ENCODE measurements at regions of chr16 and their contacts with region 1.

Region 1: GRCh38 chr16:31458844-31459721 is at the start of gene ARMC5:
- DNase-seq: peak; percentile 97
- H3K4me3 ChIP-seq: peak within 1 kb of the TSS; percentile 79 to 93 (median 88)
- H3K27ac ChIP-seq: peak within 1 kb of the TSS; percentile 91
- H3K4me1 ChIP-seq: peaks cover 41% of the 10 kb centered on the region
- H3K27me3 ChIP-seq: no peaks in the 10 kb centered on the region
- CTCF ChIP-seq: peak; percentile 25 to 68
- total RNA-seq, gene ARMC5: 8.7 to 10.7 TPM

Region 2: DNA sequence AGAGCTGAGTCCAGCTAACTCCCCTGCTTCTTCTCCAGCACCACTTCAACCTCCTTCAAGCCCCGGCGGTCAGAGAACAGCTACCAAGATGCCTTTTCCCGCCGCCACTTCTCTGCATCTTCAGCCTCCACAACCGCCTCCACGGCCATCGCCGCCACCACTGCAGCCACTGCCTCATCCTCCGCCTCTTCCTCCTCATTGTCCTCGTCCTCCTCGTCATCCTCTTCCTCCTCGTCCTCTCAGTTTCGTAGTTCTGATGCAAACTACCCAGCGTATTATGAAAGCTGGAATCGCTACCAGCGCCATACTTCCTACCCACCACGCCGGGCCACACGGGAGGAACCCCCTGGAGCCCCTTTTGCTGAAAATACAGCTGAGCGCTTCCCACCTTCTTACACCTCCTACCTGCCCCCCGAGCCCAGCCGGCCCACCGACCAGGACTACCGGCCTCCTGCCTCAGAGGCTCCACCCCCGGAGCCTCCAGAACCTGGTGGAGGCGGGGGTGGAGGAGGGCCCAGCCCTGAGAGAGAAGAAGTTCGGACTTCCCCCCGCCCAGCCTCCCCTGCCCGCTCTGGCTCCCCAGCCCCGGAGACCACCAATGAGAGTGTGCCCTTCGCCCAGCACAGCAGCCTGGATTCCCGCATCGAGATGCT is 494.4 kb before region 1 on chr16:
- CTCF ChIA-PET with region 1: no interaction called
- dilution Hi-C with region 1: loop called (anchors 10 kb)
- in situ Hi-C with region 1: no loop called
- intact Hi-C with region 1: no loop called
- DNase-seq: no peak
- H3K4me3 ChIP-seq: no peak overlapping the region
- H3K27ac ChIP-seq: no peak overlapping the region
- H3K4me1 ChIP-seq: no peaks in the 10 kb centered on the region
- H3K27me3 ChIP-seq: no peaks in the 10 kb centered on the region
- CTCF ChIP-seq: no peak

Region 3: DNA sequence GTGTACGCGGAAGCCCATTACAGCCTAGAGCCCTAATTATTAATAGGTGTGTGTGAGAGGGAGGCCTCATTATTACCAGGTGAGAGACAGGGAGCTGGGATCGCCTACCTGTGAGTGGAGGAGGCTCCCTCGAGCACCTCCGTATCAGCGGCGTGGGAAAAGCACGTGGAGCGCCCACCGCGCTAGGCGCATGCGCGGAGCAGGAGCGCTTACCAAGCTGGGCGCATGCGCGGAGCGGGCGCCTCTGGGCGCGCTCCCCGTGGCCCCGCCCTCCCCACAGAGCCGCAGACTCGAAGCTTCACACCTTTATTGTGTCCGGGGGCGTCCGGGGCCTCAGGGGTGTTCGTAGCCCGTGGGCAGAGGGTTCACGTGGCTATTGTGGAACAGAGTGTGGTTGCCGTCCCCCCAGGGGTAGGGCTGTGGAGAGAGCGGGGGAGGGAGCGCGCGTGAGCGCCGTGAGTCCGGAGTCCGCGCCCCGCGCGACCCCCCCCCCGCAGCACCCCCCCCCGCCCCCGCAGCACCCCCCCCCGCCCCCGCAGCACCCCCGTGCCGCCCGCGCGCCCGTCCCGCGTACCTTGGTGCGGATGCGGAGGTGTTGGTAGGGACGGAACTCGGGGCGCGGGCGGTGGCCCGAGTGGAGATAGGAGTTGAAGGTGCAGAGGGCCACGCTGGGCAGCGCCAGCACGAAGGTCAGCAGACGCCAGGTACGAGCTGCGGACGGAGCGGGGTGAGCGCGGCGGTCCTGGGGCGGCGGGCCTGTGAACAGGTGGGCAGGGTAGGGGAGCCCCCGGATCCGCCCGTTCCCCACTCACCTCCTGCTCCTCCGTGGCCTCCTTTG is 31.4 kb before region 1 on chr16:
- CTCF ChIA-PET with region 1: no interaction called
- dilution Hi-C with region 1: no loop called
- in situ Hi-C with region 1: no loop called
- intact Hi-C with region 1: no loop called
- DNase-seq: no peak
- H3K4me3 ChIP-seq: peak overlapping the region in 2 of 3 experiments; percentile 24 to 26
- H3K27ac ChIP-seq: no peak overlapping the region
- H3K4me1 ChIP-seq: peaks cover 3% of the 10 kb centered on the region
- H3K27me3 ChIP-seq: peaks cover 2% of the 10 kb centered on the region
- CTCF ChIP-seq: no peak

Region 4: DNA sequence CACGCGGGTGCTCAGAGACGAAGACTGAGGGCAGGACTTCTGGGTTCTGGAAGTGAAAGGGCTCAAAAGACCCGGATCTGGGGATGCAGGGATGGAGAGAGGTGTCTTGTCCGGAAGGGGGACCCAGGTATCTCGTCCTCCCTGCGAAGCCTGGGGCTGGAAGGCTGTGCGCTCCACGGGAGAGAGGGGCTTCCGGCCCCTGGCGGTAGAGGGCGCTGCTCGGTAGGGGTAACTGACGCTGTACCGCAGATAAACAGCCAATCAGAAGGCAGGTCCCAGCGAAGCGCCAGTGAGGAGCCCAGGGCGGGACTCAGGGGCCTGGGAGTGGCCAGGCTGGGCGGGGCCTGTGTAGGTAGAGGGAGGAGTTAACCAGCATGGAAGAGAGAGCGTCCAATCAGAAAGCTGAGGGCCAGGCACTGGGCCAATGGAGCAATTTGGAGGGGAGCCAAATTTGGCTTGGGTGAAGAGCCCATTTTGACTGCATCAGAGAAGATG is 13.7 kb after region 1 on chr16:
- CTCF ChIA-PET with region 1: interaction called, 3 read pairs
- dilution Hi-C with region 1: no loop called
- in situ Hi-C with region 1: no loop called
- intact Hi-C with region 1: loop called (anchors 2 kb)
- DNase-seq: peak; percentile 90
- H3K4me3 ChIP-seq: peak overlapping the region; percentile 60 to 72 (median 69)
- H3K27ac ChIP-seq: peak overlapping the region; percentile 40
- H3K4me1 ChIP-seq: peaks cover 8% of the 10 kb centered on the region
- H3K27me3 ChIP-seq: no peaks in the 10 kb centered on the region
- CTCF ChIP-seq: peak; percentile 84

Region 5: GRCh38 chr16:31528523-31529397 is 69.7 kb after region 1 on chr16:
- CTCF ChIA-PET with region 1: no interaction called
- dilution Hi-C with region 1: loop called (anchors 10 kb)
- in situ Hi-C with region 1: no loop called
- intact Hi-C with region 1: no loop called
- DNase-seq: no peak
- H3K4me3 ChIP-seq: no peak overlapping the region
- H3K27ac ChIP-seq: no peak overlapping the region
- H3K4me1 ChIP-seq: no peaks in the 10 kb centered on the region
- H3K27me3 ChIP-seq: peaks cover 20% of the 10 kb centered on the region
- CTCF ChIP-seq: no peak

Region 6: DNA sequence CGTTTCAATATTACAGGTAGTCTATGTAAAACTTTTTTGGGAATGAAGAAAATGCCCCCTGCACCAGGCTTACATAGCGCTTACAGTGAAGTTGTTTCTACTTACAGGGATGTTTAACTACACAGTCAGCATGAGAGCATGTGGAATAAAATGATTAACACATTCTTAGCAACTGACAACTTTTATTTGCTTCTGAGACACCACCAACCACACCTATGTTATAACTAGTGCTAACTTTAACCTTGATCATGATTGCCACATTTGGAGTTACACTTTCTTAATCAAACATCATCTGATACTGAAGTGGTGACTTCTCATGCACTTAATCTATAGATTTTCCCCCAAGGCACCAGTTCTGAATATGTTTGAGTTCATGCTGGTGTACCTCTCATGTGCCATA is 394.2 kb after region 1 on chr16:
- CTCF ChIA-PET with region 1: no interaction called
- dilution Hi-C with region 1: loop called (anchors 10 kb)
- in situ Hi-C with region 1: loop called in 1 of 2 experiments (anchors 25 kb)
- intact Hi-C with region 1: no loop called
- DNase-seq: no peak
- H3K4me3 ChIP-seq: no peak overlapping the region
- H3K27ac ChIP-seq: no peak overlapping the region
- H3K4me1 ChIP-seq: no peaks in the 10 kb centered on the region
- H3K27me3 ChIP-seq: no peaks in the 10 kb centered on the region
- CTCF ChIP-seq: no peak

Measured in mammary epithelial cell (primary cell).